ENCODE measurements at regions of chr9 and their contacts with region 1.

Region 1: GRCh38 chr9:5593904-5594303 is 35.0 kb upstream of the RIC1 start:
- DNase-seq: no peak

Region 2: GRCh38 chr9:4750023-4750673 is 843.8 kb before region 1 on chr9:
- intact Hi-C with region 1: loop called in 1 of 2 experiments (anchors 10 kb)
- DNase-seq: no peak

Region 3: GRCh38 chr9:4762108-4762885 is 831.6 kb before region 1 on chr9:
- intact Hi-C with region 1: loop called (anchors 10 kb)
- DNase-seq: no peak

Region 4: GRCh38 chr9:5186416-5187169 is 407.3 kb before region 1 on chr9:
- intact Hi-C with region 1: loop called in 1 of 2 experiments (anchors 10 kb)
- DNase-seq: no peak

Region 5: GRCh38 chr9:5437254-5438216 is 156.4 kb before region 1 on chr9 and contains the start of gene PLGRKT:
- intact Hi-C with region 1: loop called in 1 of 2 experiments (anchors 10 kb)
- DNase-seq: peak; percentile 98
- total RNA-seq, gene PLGRKT: 19.8 to 27.6 TPM